T-cell (primary cell): ENCODE measurements at regions of chr14 and their contacts with region 1.

Region 1: GRCh38 chr14:70600382-70601157 is at the start of gene MED6:
- DNase-seq: peak; percentile 75 to 95 (median 91)
- ATAC-seq: peak; percentile 99 to 100 (median 99)
- H3K4me3 ChIP-seq: peak within 1 kb of the TSS; percentile 86 to 91
- H3K4me3 Mint-ChIP-seq: peak within 1 kb of the TSS; percentile 99 to 100 (median 99)
- H3K27ac ChIP-seq: peak within 1 kb of the TSS; percentile 88
- H3K27ac Mint-ChIP-seq: peak within 1 kb of the TSS; percentile 97 to 98
- H3K4me1 ChIP-seq: peaks cover 14 to 15% of the 10 kb centered on the region in 2 experiments
- H3K4me1 Mint-ChIP-seq: peaks cover 29 to 42% (median 31%) of the 10 kb centered on the region in 3 donors
- H3K27me3 ChIP-seq: peaks cover 3 to 5% of the 10 kb centered on the region in 2 experiments
- H3K27me3 Mint-ChIP-seq: peaks cover 0 to 4% of the 10 kb centered on the region in 2 donors
- total RNA-seq, gene MED6: 45.1 to 96.4 (median 53.3) TPM

Region 2: DNA sequence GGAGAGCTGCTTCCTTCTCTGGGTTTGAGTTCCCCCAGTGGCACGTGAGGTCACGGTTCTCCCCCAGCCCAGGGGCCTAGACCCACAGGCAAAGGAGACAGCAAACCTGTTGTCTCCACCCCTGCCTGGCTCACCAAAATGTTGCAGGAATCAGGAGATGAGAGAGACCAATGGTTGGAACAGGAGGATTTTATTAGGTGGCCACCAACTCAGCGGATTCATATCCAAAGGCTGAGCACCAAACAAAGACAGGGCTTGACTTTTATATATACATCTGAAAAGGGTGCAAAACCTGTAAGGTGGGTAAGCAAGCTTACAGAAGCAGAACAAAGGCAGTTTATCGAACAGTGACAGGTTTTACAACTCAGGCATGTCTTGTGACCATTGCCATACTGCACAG is 157.8 kb before region 1 on chr14:
- CTCF ChIA-PET with region 1: no interaction called
- POLR2A ChIA-PET with region 1: no interaction called
- DNase-seq: no peak
- ATAC-seq: no peak
- H3K4me3 ChIP-seq: no peak overlapping the region
- H3K4me3 Mint-ChIP-seq: no peak overlapping the region
- H3K27ac ChIP-seq: no peak overlapping the region
- H3K27ac Mint-ChIP-seq: no peak overlapping the region
- H3K4me1 ChIP-seq: no peaks in the 10 kb centered on the region
- H3K4me1 Mint-ChIP-seq: no peaks in the 10 kb centered on the region
- H3K27me3 ChIP-seq: no peaks in the 10 kb centered on the region
- H3K27me3 Mint-ChIP-seq: peaks cover under 1 to 7% of the 10 kb centered on the region in 2 donors

Region 3: GRCh38 chr14:70611216-70611615 is 10.6 kb after region 1 on chr14:
- CTCF ChIA-PET with region 1: no interaction called
- POLR2A ChIA-PET with region 1: no interaction called
- DNase-seq: no peak
- ATAC-seq: no peak
- H3K4me3 ChIP-seq: no peak overlapping the region
- H3K4me3 Mint-ChIP-seq: no peak overlapping the region
- H3K27ac ChIP-seq: no peak overlapping the region
- H3K27ac Mint-ChIP-seq: no peak overlapping the region
- H3K4me1 ChIP-seq: no peaks in the 10 kb centered on the region
- H3K4me1 Mint-ChIP-seq: no peaks in the 10 kb centered on the region
- H3K27me3 ChIP-seq: peaks cover 0 to 3% of the 10 kb centered on the region in 2 experiments
- H3K27me3 Mint-ChIP-seq: peaks cover 7 to 9% of the 10 kb centered on the region in 2 donors

Region 4: GRCh38 chr14:70640938-70641547 is 40.5 kb after region 1 on chr14:
- CTCF ChIA-PET with region 1: no interaction called
- POLR2A ChIA-PET with region 1: interaction called in 1 of 2 experiments, 10 read pairs
- DNase-seq: peak in 32 of 35 experiments; percentile 16 to 70 (median 48)
- ATAC-seq: peak; percentile 67 to 74 (median 68)
- H3K4me3 ChIP-seq: peak overlapping the region; percentile 48 to 71
- H3K4me3 Mint-ChIP-seq: peak overlapping the region; percentile 95 to 98 (median 95)
- H3K27ac ChIP-seq: peak overlapping the region; percentile 35
- H3K27ac Mint-ChIP-seq: peak overlapping the region; percentile 91 to 95
- H3K4me1 ChIP-seq: peaks cover 28 to 36% of the 10 kb centered on the region in 2 experiments
- H3K4me1 Mint-ChIP-seq: peaks cover 48 to 62% (median 57%) of the 10 kb centered on the region in 3 donors
- H3K27me3 ChIP-seq: peaks cover 0 to 4% of the 10 kb centered on the region in 2 experiments
- H3K27me3 Mint-ChIP-seq: peaks cover 0 to 3% of the 10 kb centered on the region in 2 donors

Region 5: DNA sequence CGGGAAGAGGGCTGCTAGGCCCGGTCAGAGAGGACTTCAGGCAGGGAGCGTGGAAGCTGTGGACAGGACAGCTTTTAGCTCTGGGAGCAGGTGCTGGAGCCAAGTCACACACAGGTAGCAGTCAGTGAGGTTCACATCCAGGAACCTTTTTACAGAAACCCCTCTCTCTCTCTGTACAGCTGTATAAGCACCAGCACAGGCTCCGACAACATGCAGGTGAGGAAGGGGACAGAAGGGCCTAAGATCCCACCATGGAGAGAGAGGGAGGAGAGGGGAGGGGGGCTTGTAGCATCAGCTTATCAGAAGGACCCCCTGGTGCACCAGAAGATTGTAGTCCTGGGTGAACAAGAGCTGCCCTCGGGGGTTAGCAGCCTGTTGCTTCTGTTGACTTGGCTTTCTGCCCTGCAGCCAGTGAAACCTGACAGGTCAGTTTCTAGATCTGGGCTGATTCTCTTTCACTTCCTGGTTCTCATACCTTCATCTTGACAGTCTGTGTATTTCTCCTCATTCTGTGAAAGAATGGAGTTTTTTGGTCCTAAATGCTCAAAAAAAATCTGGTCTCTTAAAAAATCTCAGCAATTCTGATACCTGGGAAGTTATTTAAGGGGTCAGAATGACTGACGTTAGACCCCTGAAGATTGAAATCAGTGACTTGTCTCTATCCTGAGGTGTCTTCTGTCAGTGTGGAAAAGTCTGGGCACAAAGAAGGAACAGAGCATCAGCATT is 64.8 kb after region 1 on chr14:
- CTCF ChIA-PET with region 1: no interaction called
- POLR2A ChIA-PET with region 1: no interaction called
- DNase-seq: no peak
- ATAC-seq: no peak
- H3K4me3 ChIP-seq: peak overlapping the region in 1 of 2 donors; percentile 2
- H3K4me3 Mint-ChIP-seq: peak overlapping the region in 1 of 3 donors; percentile 69
- H3K27ac ChIP-seq: peak overlapping the region; percentile 22
- H3K27ac Mint-ChIP-seq: peak overlapping the region; percentile 79 to 85
- H3K4me1 ChIP-seq: peaks cover 41 to 53% of the 10 kb centered on the region in 2 experiments
- H3K4me1 Mint-ChIP-seq: peaks cover 60 to 72% (median 63%) of the 10 kb centered on the region in 3 donors
- H3K27me3 ChIP-seq: no peaks in the 10 kb centered on the region
- H3K27me3 Mint-ChIP-seq: no peaks in the 10 kb centered on the region

Region 6: DNA sequence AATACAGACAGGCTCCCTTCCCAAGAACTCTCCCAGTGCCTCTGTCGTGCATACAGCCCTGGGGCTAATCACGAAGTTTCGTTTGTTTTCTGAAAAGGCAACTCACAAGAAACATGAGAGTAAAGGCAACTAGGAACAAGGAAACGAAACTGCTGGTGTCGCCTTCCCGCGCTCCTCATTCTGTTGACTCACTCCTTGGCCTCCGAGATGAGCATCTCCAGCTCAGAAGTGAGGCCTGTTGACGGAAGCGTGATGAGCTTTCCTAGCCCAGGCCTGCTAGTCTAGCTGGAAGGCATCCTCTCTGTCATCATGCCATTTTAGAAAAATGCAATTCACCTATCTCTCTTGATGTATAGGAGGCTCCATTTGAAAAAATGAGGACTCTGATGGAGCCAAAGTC is 91.7 kb after region 1 on chr14:
- CTCF ChIA-PET with region 1: interaction called in 1 of 2 experiments, 10 read pairs
- POLR2A ChIA-PET with region 1: no interaction called
- DNase-seq: no peak
- ATAC-seq: no peak
- H3K4me3 ChIP-seq: no peak overlapping the region
- H3K4me3 Mint-ChIP-seq: no peak overlapping the region
- H3K27ac ChIP-seq: no peak overlapping the region
- H3K27ac Mint-ChIP-seq: no peak overlapping the region
- H3K4me1 ChIP-seq: no peaks in the 10 kb centered on the region
- H3K4me1 Mint-ChIP-seq: no peaks in the 10 kb centered on the region
- H3K27me3 ChIP-seq: no peaks in the 10 kb centered on the region
- H3K27me3 Mint-ChIP-seq: no peaks in the 10 kb centered on the region